Common myeloid progenitor, CD34-positive (primary cell): ENCODE measurements at regions of chr12 and their contacts with region 1.

Region 1: GRCh38 chr12:18261253-18261652 is at the start of gene PIK3C2G:
- DNase-seq: no peak
- H3K4me3 ChIP-seq: no peak within 1 kb of the TSS
- H3K27ac ChIP-seq: no peak within 1 kb of the TSS
- H3K4me1 ChIP-seq: no peaks in the 10 kb centered on the region
- H3K27me3 ChIP-seq: no peaks in the 10 kb centered on the region

Region 2: DNA sequence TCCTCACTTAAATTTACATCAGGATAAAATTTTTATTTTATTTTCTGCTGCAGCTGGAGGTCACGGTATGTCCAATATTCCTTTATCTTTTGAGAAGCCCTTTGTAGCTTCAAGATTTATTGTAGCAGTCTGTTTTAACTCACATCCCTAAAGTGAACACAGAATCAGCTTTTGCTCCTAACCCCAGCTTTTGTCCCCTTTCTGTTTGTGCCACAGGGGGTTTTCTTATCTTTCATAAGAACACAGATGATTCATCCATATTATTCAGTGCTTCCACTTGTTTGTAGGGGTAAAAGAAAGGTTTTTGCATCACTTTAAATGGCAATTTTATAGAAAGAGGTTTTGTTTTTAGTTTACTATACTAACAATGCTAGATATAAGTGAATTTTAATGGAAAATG is 21.7 kb before region 1 on chr12:
- CTCF ChIA-PET with region 1: no interaction called
- POLR2A ChIA-PET with region 1: no interaction called
- DNase-seq: no peak
- H3K4me3 ChIP-seq: no peak overlapping the region
- H3K27ac ChIP-seq: no peak overlapping the region
- H3K4me1 ChIP-seq: no peaks in the 10 kb centered on the region
- H3K27me3 ChIP-seq: no peaks in the 10 kb centered on the region

Region 3: DNA sequence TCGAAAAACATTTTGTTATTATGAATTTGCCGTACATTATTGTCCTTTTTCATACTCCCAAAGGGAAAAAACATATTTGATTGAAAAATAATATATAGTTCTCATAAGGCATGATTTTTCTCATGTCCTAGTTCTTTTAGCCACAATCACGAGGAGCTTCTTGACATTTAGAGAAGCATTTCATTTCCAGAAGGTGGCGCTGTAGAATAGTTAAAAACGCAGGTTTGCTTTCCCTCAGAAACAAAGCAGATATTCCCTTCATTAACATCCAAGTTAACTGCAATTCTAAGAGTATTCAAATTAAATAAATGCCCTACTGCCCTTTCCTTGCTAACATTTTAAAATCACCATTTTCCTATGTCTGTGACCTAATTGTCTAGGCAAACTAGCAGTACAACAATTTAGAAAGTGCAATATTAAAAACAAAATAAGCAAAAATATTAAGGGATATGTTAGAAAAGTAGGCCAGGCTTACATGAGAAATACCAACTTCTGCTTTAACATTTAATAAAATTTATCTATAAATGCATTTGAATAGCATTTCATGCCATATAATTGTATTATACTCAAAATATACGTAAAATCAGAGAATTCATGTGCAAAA is 10.8 kb before region 1 on chr12:
- CTCF ChIA-PET with region 1: interaction called, 10 read pairs
- POLR2A ChIA-PET with region 1: no interaction called
- DNase-seq: peak; percentile 48 to 73 (median 67)
- H3K4me3 ChIP-seq: no peak overlapping the region
- H3K27ac ChIP-seq: no peak overlapping the region
- H3K4me1 ChIP-seq: no peaks in the 10 kb centered on the region
- H3K27me3 ChIP-seq: no peaks in the 10 kb centered on the region